Activated CD4-positive, alpha-beta T cell treated with anti-CD3 and anti-CD28 coated beads for 36 hours (primary cell): ENCODE measurements at regions of chr16 and their contacts with region 1.

Region 1: DNA sequence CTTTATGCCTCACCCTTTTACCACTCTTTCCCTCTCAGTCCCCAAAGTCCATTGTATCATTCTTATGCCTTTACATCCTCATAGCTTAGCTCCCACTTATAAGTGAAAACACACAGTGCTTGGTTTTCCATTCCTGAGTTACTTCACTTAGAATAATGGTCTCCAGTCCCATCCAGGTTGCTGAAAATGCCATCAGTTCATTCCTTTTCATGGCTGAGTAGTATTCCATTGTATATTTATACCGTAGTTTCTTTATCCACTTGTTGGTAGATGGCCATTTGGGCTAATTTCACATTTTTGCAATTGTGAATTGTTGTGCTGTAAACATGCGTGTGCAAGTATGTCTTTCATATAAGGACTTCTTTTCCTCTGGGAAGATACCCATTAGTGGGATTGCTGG is 597.3 kb downstream of the WWOX start:
- DNase-seq: no peak
- ATAC-seq: no peak
- H3K4me3 Mint-ChIP-seq: no peak overlapping the region
- H3K27ac Mint-ChIP-seq: no peak overlapping the region
- H3K4me1 Mint-ChIP-seq: no peaks in the 10 kb centered on the region
- H3K27me3 Mint-ChIP-seq: no peaks in the 10 kb centered on the region

Region 2: DNA sequence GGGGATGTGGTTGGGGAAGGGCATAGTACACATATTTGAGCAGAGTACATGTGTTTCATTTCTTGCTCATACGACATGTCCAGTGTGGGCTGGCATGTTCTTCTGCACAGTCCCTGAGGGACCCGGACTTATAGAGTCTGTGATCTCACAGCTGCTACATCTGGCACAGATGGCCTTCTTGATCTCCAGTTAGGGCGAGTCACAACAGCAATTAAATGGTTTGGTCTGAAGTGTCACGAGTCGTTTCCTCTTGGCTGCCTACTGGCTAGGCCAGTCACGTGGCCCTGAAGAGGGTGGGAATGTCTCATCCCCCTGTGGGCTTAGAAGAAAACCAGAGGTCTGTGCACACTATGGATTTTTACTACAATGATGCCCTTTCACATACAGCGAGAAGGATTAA is 153.8 kb before region 1 on chr16:
- CTCF ChIA-PET with region 1: no interaction called
- POLR2A ChIA-PET with region 1: no interaction called
- intact Hi-C with region 1: no loop called
- DNase-seq: no peak
- ATAC-seq: no peak
- H3K4me3 Mint-ChIP-seq: no peak overlapping the region
- H3K27ac Mint-ChIP-seq: no peak overlapping the region
- H3K4me1 Mint-ChIP-seq: no peaks in the 10 kb centered on the region
- H3K27me3 Mint-ChIP-seq: no peaks in the 10 kb centered on the region

Region 3: GRCh38 chr16:78816499-78817195 is 119.8 kb after region 1 on chr16:
- CTCF ChIA-PET with region 1: no interaction called
- POLR2A ChIA-PET with region 1: interaction called, 11 read pairs
- intact Hi-C with region 1: no loop called
- DNase-seq: no peak
- ATAC-seq: no peak
- H3K4me3 Mint-ChIP-seq: no peak overlapping the region
- H3K27ac Mint-ChIP-seq: no peak overlapping the region
- H3K4me1 Mint-ChIP-seq: no peaks in the 10 kb centered on the region
- H3K27me3 Mint-ChIP-seq: no peaks in the 10 kb centered on the region

Region 4: GRCh38 chr16:78836802-78837491 is 140.2 kb after region 1 on chr16:
- CTCF ChIA-PET with region 1: no interaction called
- POLR2A ChIA-PET with region 1: no interaction called
- intact Hi-C with region 1: no loop called
- DNase-seq: peak; percentile 8
- ATAC-seq: peak; percentile 87
- H3K4me3 Mint-ChIP-seq: peak overlapping the region; percentile 41
- H3K27ac Mint-ChIP-seq: peak overlapping the region; percentile 78
- H3K4me1 Mint-ChIP-seq: peaks cover 11% of the 10 kb centered on the region
- H3K27me3 Mint-ChIP-seq: no peaks in the 10 kb centered on the region